IMR-90 (cell line): ENCODE measurements at regions of chr1 and their contacts with region 1.

Region 1: GRCh38 chr1:161933592-161934588 is 89.8 kb downstream of the OLFML2B start:
- DNase-seq: no peak
- ATAC-seq: no peak
- H3K4me3 ChIP-seq: no peak overlapping the region
- H3K27ac ChIP-seq: no peak overlapping the region
- H3K4me1 ChIP-seq: no peaks in the 10 kb centered on the region; the same call in 1 of the 2 replicates
- H3K27me3 ChIP-seq: no peaks in the 10 kb centered on the region
- CTCF ChIP-seq: no peak
- POLR2A ChIP-seq: no peak
- RAD21 ChIP-seq: no peak

Region 2: GRCh38 chr1:161890574-161890973 is 43.3 kb before region 1 on chr1:
- CTCF ChIA-PET with region 1: no interaction called
- POLR2A ChIA-PET with region 1: no interaction called
- dilution Hi-C with region 1: no loop called
- in situ Hi-C with region 1: no loop called
- intact Hi-C with region 1: loop called (anchors 5 kb)
- DNase-seq: no peak
- ATAC-seq: no peak
- H3K4me3 ChIP-seq: no peak overlapping the region
- H3K27ac ChIP-seq: no peak overlapping the region
- H3K4me1 ChIP-seq: no peaks in the 10 kb centered on the region
- H3K27me3 ChIP-seq: no peaks in the 10 kb centered on the region
- CTCF ChIP-seq: no peak
- POLR2A ChIP-seq: no peak
- RAD21 ChIP-seq: no peak